Spleen (tissue), 13 donors: ENCODE measurements at regions of chr9 and their contacts with region 1.

Region 1: DNA sequence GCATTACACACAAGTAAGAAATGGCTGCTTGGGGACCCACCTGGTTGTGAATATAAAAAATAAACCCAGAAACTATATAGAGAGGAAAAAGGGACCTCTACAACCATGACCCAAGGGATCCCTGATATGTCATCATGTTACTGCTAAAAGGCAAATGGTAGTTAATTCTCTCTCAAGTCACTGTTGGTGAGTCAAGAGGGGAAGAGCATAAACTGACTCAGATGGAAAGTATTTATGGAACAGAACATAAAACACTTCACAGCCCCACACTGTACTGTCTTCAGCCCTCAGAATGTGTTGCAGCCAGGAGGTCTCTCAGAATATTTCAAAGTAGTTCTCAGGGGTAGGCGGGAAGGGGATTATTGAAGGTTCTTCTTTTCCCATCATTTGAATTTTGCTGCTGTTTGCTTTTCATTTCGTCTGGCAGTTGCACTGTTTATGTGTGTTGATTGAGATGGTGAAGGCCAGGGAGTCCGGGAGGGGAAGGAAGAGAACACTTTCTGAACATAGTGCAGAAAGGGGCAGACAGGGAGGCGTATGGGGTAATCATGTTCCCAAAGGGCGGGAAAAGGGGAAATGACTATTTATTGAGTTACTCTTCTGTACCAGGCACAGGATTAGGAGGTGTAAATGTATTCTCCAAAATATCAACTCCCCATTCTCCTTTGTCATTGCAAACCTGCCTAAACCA is 85.5 kb downstream of the TEK start:
- DNase-seq: no peak
- H3K4me3 ChIP-seq: no peak overlapping the region
- H3K27ac ChIP-seq: peak overlapping the region in 4 of 8 donors; percentile 5 to 46 (median 24)
- H3K4me1 ChIP-seq: peaks cover 0 to 18% (median 5%) of the 10 kb centered on the region in 6 donors
- H3K27me3 ChIP-seq: no peaks in the 10 kb centered on the region
- CTCF ChIP-seq: no peak
- POLR2A ChIP-seq: no peak

Region 2: GRCh38 chr9:27059907-27060306 is 134.6 kb before region 1 on chr9:
- intact Hi-C with region 1: loop called (anchors 10 kb)
- DNase-seq: no peak
- H3K4me3 ChIP-seq: no peak overlapping the region
- H3K27ac ChIP-seq: peak overlapping the region in 7 of 8 donors; percentile 21 to 54 (median 34)
- H3K4me1 ChIP-seq: peaks cover 0 to 7% (median 0%) of the 10 kb centered on the region in 6 donors
- H3K27me3 ChIP-seq: no peaks in the 10 kb centered on the region
- CTCF ChIP-seq: no peak
- POLR2A ChIP-seq: no peak

Region 3: DNA sequence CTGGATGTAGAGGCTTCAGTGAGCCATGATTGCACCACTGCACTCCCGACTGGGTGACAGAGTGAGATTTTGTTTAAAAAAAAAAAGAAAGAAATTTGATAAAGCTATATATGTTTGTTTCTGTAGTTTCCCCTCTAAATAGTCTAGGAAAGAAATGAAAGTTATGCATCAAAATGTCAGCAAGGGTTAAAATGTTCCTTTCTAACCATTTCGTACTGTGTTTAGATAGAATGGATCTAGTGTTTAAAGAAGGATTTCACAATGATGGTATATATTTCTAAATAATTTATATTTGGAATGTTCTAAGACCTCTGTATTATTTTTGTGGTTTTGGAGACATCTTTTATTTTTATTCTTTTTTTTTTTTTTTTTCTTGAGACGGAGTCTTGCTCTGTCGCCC is 62.8 kb before region 1 on chr9:
- intact Hi-C with region 1: loop called (anchors 10 kb)
- DNase-seq: no peak
- H3K4me3 ChIP-seq: no peak overlapping the region
- H3K27ac ChIP-seq: no peak overlapping the region
- H3K4me1 ChIP-seq: no peaks in the 10 kb centered on the region
- H3K27me3 ChIP-seq: no peaks in the 10 kb centered on the region
- CTCF ChIP-seq: no peak
- POLR2A ChIP-seq: no peak

Region 4: DNA sequence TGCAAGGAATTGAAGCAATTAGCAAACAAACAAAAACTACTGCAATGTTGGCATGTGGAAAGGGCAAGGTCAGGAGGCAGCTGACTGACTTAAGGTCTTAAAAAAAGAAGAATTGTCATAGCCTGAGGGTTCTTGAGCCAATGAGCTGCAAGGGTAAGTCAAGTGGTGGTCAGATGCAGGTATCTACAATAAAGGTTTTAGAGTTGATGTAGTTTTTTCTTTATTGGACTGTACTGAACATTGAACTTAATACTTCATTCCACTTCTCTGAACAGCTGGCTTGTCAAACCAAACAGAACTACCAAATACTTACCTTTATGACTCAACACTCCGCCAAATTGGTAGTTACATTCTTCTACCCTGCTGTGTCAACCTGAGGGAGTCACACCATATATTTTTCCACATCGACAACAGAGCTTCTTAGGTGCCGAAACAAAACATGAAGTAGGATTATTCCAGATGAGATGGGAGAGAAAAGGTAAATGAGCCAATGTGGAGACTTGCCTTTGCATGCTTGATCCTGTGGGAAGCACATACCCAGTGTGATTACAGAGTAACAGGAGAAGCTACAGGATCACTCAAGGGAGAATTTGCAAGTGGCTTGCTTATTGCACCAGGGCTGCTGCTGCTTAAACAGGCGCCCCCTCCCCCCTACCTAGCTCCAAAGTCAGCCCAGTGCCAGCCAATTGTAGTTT is 67.1 kb after region 1 on chr9:
- intact Hi-C with region 1: no loop called
- DNase-seq: no peak
- H3K4me3 ChIP-seq: no peak overlapping the region
- H3K27ac ChIP-seq: no peak overlapping the region
- H3K4me1 ChIP-seq: no peaks in the 10 kb centered on the region
- H3K27me3 ChIP-seq: no peaks in the 10 kb centered on the region
- CTCF ChIP-seq: no peak
- POLR2A ChIP-seq: no peak